ENCODE measurements at regions of chr6 and their contacts with region 1.

Region 1: DNA sequence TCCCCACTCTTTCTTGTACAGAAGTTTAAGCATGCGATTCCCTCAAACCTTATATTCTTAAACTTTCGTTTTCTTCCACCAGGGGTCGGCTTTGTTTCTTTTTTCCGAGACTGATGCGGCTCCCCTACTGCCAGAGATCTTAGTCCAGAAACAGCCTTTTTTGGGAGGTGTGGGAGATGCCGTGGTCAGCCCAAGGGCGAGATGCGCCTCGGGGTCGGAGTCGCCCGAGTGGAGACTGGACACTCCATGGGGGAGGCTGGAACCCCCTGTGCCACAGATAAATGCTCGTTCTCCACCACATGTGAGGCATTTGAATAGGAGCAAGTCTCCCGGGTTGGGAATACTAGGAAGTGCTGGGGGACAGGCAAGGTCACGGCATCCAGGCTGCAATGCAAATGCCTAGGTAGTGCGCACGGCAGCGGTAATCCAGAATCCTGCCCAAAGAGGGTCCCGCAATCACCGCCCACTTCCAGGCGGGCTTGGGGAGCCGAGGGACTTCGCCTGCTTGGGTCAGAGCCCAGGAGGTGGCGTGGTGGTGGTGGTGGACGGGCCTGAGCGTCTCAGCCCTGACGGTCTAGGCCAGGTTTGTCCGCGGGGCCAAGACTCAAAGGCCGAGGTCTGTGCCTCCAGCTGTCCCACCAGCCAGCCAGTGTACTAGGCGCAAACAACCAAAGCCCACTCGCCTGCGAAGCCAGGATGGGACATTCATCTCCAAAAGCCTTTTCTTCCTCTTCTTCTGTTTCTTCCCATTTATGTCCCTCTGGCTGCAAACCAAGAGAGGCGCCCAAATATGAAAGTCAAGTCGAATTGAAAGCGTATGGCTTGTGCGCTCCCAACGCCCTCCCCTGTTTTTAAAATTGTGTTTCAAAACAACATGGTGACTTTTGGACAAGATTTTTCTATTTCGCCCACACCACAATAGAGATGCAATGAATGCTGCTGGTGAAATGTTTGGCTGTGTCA is 39.3 kb upstream of the OSTM1 start:
- DNase-seq: peak; percentile 81

Region 2: DNA sequence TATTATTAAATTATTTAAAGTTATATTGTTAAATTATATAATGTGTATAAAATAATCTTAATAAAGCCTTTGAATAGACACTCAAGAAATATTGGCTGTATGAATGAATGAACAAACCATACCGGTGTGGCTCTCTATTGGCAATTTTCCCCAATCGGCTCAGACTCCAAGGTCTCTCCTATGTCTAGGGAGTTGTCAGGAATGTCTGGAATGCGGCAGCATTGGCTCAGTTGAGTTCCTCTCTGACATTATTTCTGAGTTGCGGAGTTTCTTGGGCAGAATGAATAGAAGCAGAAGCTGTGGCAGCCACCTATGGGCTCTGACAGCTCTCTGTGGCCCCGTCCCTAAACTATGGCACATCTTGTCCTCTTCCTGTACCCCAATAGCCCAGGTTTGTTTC is 512.9 kb before region 1 on chr6:
- in situ Hi-C with region 1: no loop called
- DNase-seq: no peak

Region 3: DNA sequence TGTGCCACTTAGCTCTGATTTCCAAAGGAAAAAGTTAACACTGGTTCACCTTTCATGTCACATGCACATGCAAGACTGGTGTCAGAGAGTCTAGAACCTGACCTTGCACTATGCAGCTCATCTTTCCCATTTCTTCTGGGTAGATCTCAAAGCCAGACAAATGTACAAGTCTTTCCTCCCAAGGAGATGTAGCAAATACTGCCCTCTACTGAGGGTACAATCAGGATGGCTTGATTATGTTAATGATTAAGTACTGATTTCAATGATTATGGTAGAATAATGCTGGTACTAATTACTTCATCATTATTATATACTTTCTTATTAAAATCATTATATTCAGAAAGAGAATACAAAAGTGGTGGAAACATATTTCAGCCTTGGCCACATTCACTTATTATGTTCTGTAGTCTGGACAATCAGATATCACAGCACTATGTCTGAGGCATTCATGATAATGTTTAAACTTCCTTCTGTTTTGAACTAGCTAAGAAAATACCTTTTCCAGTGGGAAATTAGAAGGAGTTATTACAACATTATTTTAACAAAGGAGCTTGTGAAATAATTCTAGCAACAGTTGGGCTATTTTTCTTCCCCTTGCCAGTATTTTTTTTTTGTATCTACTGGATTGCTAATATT is 378.4 kb after region 1 on chr6:
- in situ Hi-C with region 1: loop called (anchors 25 kb)
- DNase-seq: peak; percentile 48